ENCODE measurements at regions of chr6 and their contacts with region 1.

Region 1: GRCh38 chr6:21710908-21711627 is 117.5 kb downstream of the SOX4 start:
- DNase-seq: no peak
- H3K4me3 ChIP-seq: no peak overlapping the region
- H3K27ac ChIP-seq: no peak overlapping the region
- H3K4me1 ChIP-seq: peaks cover 4% of the 10 kb centered on the region
- CTCF ChIP-seq: no peak

Region 2: DNA sequence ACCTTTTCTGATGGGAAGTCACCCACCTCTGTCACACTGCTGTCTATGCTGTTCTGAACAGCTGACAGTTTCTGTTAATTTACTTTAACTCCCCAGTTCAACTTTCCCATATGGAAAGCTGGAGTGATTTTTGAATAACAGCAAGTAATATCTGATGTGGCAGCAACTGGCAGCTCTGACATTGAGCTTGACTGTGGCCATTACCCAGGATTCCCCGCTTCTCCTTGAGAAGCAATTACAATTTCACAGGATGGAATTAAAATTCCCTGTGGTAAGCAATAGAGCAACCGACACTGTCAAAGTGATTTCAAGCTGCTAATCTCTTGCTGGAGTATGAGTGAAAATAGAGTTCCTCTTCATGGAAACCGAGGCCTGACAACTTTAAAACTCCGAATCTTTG is 465.6 kb before region 1 on chr6:
- CTCF ChIA-PET with region 1: no interaction called
- POLR2A ChIA-PET with region 1: no interaction called
- intact Hi-C with region 1: no loop called
- DNase-seq: no peak
- H3K4me3 ChIP-seq: no peak overlapping the region
- H3K27ac ChIP-seq: no peak overlapping the region
- H3K4me1 ChIP-seq: no peaks in the 10 kb centered on the region
- CTCF ChIP-seq: no peak

Region 3: GRCh38 chr6:21648475-21649130 is 62.5 kb before region 1 on chr6:
- CTCF ChIA-PET with region 1: no interaction called
- POLR2A ChIA-PET with region 1: no interaction called
- intact Hi-C with region 1: no loop called
- DNase-seq: peak; percentile 37
- H3K4me3 ChIP-seq: no peak overlapping the region
- H3K27ac ChIP-seq: no peak overlapping the region
- H3K4me1 ChIP-seq: peaks cover 8% of the 10 kb centered on the region
- CTCF ChIP-seq: no peak

Region 4: DNA sequence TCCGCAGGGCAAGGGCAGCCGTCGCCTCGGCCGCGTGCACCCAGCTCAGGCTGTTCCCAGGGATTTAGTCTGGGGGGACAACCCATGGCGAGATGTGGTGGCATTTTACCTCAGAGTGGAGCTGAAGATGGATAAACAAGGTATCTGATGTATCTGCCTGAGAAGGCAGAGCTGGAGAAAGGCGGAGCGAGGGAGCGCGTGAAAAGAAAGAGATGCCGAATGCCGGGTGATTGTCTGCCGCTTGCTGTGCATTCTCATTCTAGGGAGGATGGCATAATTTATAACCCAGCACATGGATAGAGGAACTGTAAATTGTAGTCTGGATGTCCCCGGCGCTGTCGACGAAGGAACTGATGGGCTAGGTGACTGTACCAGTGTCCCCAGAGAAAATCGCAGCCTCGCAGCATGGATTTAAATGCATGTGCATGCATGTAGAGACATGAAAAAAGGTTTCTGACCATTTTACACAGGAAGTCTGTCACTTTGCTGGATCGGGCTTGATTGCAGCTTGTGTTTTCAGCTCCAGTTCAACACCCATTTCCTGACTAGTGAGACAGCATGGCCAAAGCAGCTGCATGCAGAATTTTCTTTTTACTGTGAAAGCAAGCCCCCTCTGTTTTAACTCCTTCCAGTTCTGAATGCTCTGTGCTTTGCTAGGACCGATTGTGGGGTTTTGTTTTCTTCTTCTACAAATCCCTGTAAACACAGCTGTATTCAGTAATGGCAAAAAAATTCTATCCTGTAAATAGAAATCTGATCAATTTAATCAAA is 436.0 kb after region 1 on chr6:
- CTCF ChIA-PET with region 1: no interaction called
- POLR2A ChIA-PET with region 1: interaction called, 10 read pairs
- intact Hi-C with region 1: no loop called
- DNase-seq: no peak
- H3K4me3 ChIP-seq: no peak overlapping the region
- H3K27ac ChIP-seq: no peak overlapping the region
- H3K4me1 ChIP-seq: no peaks in the 10 kb centered on the region
- CTCF ChIP-seq: no peak

Measured in OCI-LY7 (cell line).